ENCODE measurements at regions of chr22 and their contacts with region 1.

Region 1: GRCh38 chr22:39170825-39171622 is 18.5 kb upstream of the CBX7 start:
- H3K4me3 Mint-ChIP-seq: no peak overlapping the region
- H3K27ac Mint-ChIP-seq: peak overlapping the region; percentile 35
- H3K4me1 Mint-ChIP-seq: peaks cover 37% of the 10 kb centered on the region
- H3K27me3 Mint-ChIP-seq: peaks cover 58% of the 10 kb centered on the region

Region 2: DNA sequence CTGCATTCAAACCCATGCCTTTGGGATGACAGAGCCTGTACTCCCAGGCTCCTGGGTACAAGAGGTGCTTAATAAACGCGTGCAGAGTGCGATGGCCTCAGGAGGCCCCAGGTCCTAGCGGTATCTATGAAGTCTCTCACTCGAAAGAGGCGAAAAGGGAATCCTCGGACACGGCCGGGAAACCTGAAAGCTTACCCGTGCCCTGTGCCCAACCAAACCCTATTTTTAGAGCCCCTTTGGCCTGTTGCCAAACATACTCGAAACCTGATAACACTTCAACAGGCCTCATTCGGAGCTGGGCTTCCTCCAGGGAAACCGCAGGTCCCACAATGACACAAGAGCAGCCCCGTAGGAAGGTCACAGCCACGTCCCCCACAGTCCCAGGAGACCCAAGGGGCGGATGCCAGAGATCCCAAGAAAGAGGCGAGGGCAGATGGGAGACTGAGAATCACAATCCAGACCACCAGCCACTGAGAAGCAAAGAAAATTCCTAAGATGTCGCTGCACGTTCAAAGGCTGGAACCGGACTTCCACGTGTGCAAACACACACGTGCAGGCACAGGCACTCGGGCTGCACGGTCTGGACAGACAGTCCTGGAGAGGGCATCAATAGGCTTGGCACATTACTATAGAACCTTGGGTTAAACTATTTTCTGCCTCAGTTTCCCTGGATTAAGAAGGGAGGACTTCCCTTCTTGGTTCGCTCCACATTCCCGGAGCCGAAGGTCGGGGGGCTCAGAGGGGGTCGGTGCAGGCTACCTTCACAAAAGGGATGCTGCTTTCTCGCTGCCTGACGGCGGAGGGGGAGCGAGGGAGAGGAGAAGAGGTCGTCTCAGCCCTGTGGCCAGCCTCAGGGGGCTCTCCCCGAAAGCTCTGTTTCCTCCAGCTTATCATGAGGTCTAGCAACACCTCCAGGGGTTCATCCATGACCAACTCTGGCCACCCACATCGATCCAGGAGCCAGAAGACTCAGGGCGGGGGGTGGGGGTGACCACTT is 65.6 kb after region 1 on chr22:
- intact Hi-C with region 1: loop called (anchors 10 kb)
- H3K4me3 Mint-ChIP-seq: peak overlapping the region; percentile 42
- H3K27ac Mint-ChIP-seq: no peak overlapping the region
- H3K4me1 Mint-ChIP-seq: peaks cover 89% of the 10 kb centered on the region
- H3K27me3 Mint-ChIP-seq: peaks cover 96% of the 10 kb centered on the region

Region 3: GRCh38 chr22:39306581-39307361 is 135.7 kb after region 1 on chr22:
- intact Hi-C with region 1: loop called (anchors 1 kb)
- H3K4me3 Mint-ChIP-seq: no peak overlapping the region
- H3K27ac Mint-ChIP-seq: peak overlapping the region; percentile 54
- H3K4me1 Mint-ChIP-seq: peaks cover 64% of the 10 kb centered on the region
- H3K27me3 Mint-ChIP-seq: no peaks in the 10 kb centered on the region

Region 4: GRCh38 chr22:39319270-39320022 is 148.4 kb after region 1 on chr22 and contains the start of gene RPL3:
- intact Hi-C with region 1: loop called (anchors 1 kb)
- H3K4me3 Mint-ChIP-seq: peak within 1 kb of the TSS; percentile 99
- H3K27ac Mint-ChIP-seq: peak within 1 kb of the TSS; percentile 100
- H3K4me1 Mint-ChIP-seq: peaks cover 53% of the 10 kb centered on the region
- H3K27me3 Mint-ChIP-seq: no peaks in the 10 kb centered on the region

Measured in dendritic cell treated with granulocyte-macrophage colony-stimulating factor and Interleukin-4, amounts not matched to agents 40 ng/mL and 50 ng/mL, for 4 days (primary cell).